Aorta (tissue), 5 donors: ENCODE measurements at regions of chrX and their contacts with region 1.

Region 1: GRCh38 chrX:119574394-119575266 is at the start of gene UBE2A:
- DNase-seq: peak; percentile 94 to 95
- ATAC-seq: peak; percentile 96
- H3K4me3 ChIP-seq: peak within 1 kb of the TSS; percentile 49 to 75
- H3K27ac ChIP-seq: peak within 1 kb of the TSS; percentile 16 to 68
- H3K4me1 ChIP-seq: no peaks in the 10 kb centered on the region
- H3K27me3 ChIP-seq: no peaks in the 10 kb centered on the region
- total RNA-seq, gene UBE2A: 45.4 to 51.1 TPM

Region 2: GRCh38 chrX:119605464-119606279 is 31.0 kb after region 1 on chrX:
- intact Hi-C with region 1: loop called in 1 of 2 experiments (anchors 2 kb)
- DNase-seq: peak; percentile 55 to 79
- ATAC-seq: peak; percentile 71
- H3K4me3 ChIP-seq: peak overlapping the region; percentile 27 to 48
- H3K27ac ChIP-seq: peak overlapping the region in 1 of 2 donors; percentile 55
- H3K4me1 ChIP-seq: no peaks in the 10 kb centered on the region
- H3K27me3 ChIP-seq: no peaks in the 10 kb centered on the region

Region 3: DNA sequence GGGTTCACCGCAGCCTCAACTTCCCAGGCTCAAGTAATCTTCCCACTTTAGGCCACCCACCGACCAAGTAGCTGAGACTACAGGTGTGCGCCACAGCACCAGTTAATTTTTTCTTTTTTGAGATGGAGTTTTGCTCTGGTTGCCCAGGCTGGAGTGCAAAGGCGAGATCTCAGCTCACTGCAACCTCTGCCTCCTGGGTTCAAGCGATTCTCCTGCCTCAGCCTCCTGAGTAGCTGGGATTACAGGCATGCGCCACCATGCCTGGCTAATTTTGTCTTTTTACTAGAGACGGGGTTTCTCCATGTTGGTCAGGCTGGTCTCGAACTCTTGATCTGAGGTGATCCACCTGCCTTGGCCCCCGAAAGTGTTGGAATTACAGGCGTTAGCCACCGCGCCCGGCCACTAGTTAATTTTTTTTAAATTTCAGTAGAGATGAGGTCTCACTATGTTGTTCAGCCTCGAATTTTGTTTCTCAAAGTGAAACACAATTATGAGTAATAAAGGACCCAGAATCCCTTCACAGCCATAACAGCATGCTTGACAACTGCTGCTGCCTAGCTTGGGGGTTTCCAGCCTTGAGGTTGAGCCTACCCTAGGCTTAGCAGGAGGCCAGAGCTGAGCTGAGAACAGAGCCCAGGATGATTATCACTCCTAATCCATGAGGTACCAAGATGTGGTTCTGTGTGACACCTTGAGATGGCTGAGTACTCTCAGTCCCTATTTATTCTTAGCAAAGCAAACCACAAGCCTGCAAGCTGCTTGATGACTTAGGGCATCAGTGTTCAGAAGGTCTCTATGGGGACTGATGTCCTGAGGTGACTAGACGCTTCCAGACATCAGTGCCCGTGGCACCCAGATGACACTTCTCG is 73.2 kb after region 1 on chrX:
- intact Hi-C with region 1: no loop called
- DNase-seq: no peak
- ATAC-seq: no peak
- H3K4me3 ChIP-seq: no peak overlapping the region
- H3K27ac ChIP-seq: no peak overlapping the region
- H3K4me1 ChIP-seq: no peaks in the 10 kb centered on the region
- H3K27me3 ChIP-seq: no peaks in the 10 kb centered on the region